Activated naive CD4-positive, alpha-beta T cell treated with anti-CD3 and anti-CD28 coated beads for 36 hours (primary cell): ENCODE measurements at regions of chr4 and their contacts with region 1.

Region 1: GRCh38 chr4:70687821-70688794 is at the start of gene UTP3:
- DNase-seq: peak; percentile 96
- H3K4me3 Mint-ChIP-seq: peak within 1 kb of the TSS; percentile 87
- H3K27ac Mint-ChIP-seq: peak within 1 kb of the TSS; percentile 99
- H3K4me1 Mint-ChIP-seq: peaks cover 30% of the 10 kb centered on the region
- H3K27me3 Mint-ChIP-seq: no peaks in the 10 kb centered on the region
- total RNA-seq, gene UTP3: 18.7 to 20.0 TPM

Region 2: DNA sequence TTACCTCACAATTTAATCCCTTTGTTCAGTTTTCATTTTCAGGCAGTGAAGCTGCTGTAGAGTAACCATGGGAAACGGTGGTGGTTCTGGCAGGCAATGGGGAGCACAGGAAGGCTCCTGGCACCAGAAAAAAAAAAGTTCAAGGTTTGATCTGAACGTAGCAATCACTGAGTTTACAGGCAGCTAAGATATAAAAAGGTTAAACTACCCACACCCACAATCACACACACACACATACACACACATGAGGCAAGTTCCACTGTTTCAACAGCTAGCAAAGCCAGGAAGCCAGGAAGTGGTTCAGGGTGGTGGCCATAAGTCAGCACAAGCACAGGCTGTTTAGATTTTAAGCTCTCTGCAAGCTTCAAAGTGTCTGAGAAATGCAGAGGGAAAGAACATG is 927.7 kb before region 1 on chr4 and contains the start of gene SULT1B1:
- CTCF ChIA-PET with region 1: no interaction called
- intact Hi-C with region 1: loop called (anchors 5 kb)
- DNase-seq: peak; percentile 79
- H3K4me3 Mint-ChIP-seq: peak within 1 kb of the TSS; percentile 79
- H3K27ac Mint-ChIP-seq: peak within 1 kb of the TSS; percentile 98
- H3K4me1 Mint-ChIP-seq: peaks cover 56% of the 10 kb centered on the region
- H3K27me3 Mint-ChIP-seq: no peaks in the 10 kb centered on the region
- total RNA-seq, gene SULT1B1: 4.3 to 5.4 TPM

Region 3: GRCh38 chr4:70619288-70619687 is 68.8 kb before region 1 on chr4:
- CTCF ChIA-PET with region 1: no interaction called
- intact Hi-C with region 1: loop called (anchors 2 kb)
- DNase-seq: no peak
- H3K4me3 Mint-ChIP-seq: no peak overlapping the region
- H3K27ac Mint-ChIP-seq: no peak overlapping the region
- H3K4me1 Mint-ChIP-seq: peaks cover under 1% of the 10 kb centered on the region
- H3K27me3 Mint-ChIP-seq: no peaks in the 10 kb centered on the region

Region 4: DNA sequence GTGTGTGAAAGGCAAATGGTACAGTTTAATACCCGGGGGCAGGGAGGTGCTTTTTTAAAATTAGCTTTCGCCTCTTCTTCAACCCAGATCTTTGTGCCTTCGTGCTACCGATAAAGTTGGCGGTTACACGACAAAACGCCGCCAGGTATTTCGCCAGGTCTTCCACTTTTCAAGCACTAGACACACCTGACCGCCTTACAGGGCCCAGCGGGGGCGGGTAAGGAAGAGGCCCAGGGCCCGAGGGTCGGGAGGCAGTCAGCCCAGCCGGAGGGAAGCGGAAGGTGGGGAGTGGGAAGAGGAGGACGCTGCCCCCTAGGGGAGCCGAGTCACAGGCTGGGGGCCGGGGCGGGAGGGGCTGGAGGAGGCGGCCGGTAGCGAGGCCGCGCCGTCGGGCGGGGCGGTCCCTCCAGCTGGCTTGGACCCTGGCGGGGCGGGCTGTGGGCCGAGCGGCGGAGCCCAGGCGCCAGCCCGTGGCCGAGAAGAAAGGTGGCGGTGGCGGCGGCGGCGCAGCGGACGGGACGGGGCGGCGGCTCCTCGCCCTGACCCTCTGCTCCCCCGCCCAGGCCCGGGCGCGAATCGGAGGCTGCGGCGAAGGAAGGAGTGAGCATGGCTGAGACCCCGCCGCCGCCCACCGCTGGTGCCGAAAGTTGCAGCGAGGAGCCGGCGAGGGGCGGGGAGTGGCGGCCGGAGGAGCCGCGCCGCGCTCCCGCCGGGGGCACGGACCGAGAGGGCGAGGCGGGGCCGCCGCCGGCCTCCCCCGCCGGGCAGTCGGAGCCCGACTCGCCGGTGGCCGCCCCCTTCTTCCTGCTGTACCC is 16.4 kb after region 1 on chr4:
- CTCF ChIA-PET with region 1: interaction called, 18 read pairs
- intact Hi-C with region 1: loop called (anchors 1 kb)
- DNase-seq: peak; percentile 69
- H3K4me3 Mint-ChIP-seq: peak overlapping the region; percentile 81
- H3K27ac Mint-ChIP-seq: peak overlapping the region; percentile 85
- H3K4me1 Mint-ChIP-seq: peaks cover 27% of the 10 kb centered on the region
- H3K27me3 Mint-ChIP-seq: no peaks in the 10 kb centered on the region

Region 5: DNA sequence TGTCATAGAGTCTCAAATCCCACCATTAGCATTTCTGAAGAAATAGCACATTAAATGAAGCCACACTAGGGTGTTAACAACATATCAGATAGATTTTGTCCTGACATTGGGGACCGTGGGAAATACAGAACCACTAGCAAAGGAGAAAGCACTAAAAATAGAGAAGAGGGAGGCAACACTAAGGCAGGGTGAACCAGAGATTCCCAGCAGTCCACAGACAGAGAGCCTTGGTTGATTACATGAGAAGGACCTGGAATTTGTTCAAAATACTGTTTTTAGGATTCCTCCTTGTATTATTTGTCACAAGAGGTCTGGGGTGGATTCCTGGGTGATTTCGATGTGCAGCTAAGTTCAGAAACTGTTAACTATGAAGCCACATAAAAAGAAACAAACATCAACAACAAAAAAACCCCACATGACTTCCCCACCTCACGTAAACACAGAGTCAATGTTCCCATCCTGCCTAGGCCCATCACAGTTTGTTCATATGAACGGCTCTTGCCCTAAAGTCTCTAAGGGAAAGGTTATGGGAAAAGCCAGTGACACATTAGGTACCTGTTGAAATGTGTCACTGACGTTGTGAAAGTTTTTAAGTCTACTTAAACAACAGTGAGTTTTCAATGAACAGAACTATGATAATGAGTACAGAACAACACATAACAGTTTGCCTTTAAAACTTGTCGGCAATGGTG is 175.1 kb after region 1 on chr4:
- CTCF ChIA-PET with region 1: no interaction called
- intact Hi-C with region 1: loop called (anchors 1 kb)
- DNase-seq: peak; percentile 53
- H3K4me3 Mint-ChIP-seq: no peak overlapping the region
- H3K27ac Mint-ChIP-seq: no peak overlapping the region
- H3K4me1 Mint-ChIP-seq: peaks cover 11% of the 10 kb centered on the region
- H3K27me3 Mint-ChIP-seq: no peaks in the 10 kb centered on the region

Region 6: DNA sequence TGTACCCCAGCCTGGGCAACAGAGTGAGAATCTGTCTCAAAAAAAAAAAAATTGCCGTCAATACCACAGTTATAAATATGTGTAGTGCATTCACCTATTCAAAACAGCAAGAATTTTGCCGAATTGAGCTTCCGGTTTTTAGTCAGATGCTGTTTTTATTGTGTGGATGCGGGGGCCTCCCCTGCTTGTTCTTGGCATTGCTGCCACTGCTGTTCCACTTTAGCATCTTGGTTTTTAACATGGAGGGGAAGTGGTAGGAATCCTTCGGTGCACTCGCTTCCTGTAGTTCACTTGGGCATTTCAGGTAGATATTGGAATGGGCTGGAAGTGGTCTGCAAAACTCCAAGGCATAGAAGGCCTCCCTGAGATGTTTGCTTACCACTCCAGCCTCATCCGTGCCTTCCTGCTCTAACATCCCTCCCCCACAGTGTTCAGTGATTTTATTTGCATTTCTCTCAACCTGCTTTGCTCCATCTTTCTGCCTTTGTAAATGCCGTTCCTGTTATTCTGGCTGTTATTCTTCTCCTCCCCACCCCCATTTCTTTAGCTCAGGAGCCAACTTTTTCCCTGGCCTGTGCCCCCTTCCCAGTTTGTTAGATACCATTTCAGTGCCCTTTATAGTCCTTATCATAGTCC is 239.5 kb after region 1 on chr4:
- CTCF ChIA-PET with region 1: no interaction called
- intact Hi-C with region 1: loop called (anchors 1 kb)
- DNase-seq: peak; percentile 73
- H3K4me3 Mint-ChIP-seq: peak overlapping the region; percentile 51
- H3K27ac Mint-ChIP-seq: peak overlapping the region; percentile 66
- H3K4me1 Mint-ChIP-seq: peaks cover 28% of the 10 kb centered on the region
- H3K27me3 Mint-ChIP-seq: no peaks in the 10 kb centered on the region

Region 7: GRCh38 chr4:71004281-71004851 is 316.3 kb after region 1 on chr4:
- CTCF ChIA-PET with region 1: no interaction called
- intact Hi-C with region 1: loop called (anchors 1 kb)
- DNase-seq: peak; percentile 82
- H3K4me3 Mint-ChIP-seq: peak overlapping the region; percentile 26
- H3K27ac Mint-ChIP-seq: peak overlapping the region; percentile 1
- H3K4me1 Mint-ChIP-seq: peaks cover 77% of the 10 kb centered on the region
- H3K27me3 Mint-ChIP-seq: no peaks in the 10 kb centered on the region